Endothelial cell of umbilical vein (primary cell): ENCODE measurements at regions of chr2 and their contacts with region 1.

Region 1: DNA sequence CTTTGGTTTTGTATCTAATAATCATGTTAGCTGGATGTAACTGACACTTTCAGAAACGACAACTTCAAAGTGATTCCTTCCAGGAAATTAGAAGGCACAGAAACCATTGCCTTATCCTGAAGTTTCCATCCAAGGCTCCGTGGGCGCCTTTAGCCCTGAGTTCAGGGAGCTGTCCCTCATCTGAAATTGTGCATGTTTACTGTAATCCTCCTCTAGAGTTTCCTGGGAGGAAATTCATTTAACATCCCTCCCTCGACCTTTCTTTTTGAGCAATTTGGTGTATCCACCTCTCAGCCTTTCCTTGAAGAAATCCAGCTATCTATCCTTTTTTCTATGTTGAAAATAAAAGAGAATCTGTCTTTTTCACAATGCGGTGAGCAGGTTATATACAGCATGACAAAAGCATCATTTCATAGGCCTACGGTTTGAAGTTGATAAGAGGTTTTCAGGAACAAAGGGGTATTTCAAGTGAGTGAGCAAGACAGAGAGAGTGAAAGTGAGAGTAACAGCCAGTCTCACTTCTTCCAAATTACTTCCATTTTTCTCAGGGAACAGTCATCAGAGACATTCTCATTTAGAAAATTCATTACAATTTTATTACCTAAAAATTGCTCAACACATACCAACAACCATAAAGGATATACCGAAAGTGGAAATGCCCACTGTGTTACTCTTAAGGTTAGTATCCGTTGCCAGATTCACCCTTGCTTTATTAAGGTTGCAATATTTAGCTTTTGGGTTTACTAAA is 167.3 kb downstream of the MREG start:
- DNase-seq: peak; percentile 58
- H3K4me3 ChIP-seq: peak overlapping the region in 2 of 3 experiments; percentile 13 to 91
- H3K27ac ChIP-seq: peak overlapping the region; percentile 98
- H3K4me1 ChIP-seq: peaks cover 87% of the 10 kb centered on the region
- H3K27me3 ChIP-seq: no peaks in the 10 kb centered on the region
- CTCF ChIP-seq: no peak
- POLR2A ChIP-seq: peak; percentile 8

Region 2: DNA sequence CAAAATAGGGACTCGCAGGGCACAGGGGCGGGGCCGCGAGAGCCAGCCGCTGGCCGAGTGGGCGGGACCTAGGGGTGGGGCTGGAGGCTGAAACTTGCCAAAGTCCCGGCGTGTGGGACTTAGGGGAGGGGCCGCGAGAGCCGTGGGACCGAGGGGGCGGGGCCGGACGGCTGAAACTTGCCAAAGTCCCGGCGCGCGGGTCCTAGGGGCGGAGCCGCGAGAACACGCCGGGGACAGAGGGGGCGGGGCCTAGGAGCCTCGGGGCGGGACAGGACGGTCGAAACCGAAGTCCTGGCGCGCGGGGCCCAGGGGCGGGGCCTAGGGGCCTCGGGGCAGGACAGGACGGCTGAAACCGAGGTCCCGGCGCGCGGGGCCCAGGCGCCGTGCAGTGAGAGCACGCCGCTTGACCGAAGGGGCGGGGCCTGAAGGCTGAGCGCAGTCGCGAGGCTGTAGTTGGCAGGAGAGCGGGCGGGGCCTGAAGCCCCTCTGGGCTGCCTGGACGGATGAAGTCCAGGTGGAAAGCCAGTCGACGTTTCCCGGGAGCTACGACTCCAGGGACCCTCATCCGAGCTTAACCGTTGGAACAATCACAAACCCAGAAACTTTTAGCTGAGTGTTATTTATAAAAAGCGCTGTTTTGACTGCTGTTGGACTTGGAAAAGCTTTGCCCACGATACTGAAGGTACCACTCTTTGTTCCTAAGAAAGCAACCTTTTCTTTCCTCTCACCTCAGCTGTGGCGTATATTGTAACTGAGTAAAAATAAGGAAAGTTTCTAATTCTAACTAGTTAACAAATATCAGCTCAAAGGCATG is 1036.1 kb before region 1 on chr2:
- CTCF ChIA-PET with region 1: no interaction called
- POLR2A ChIA-PET with region 1: no interaction called
- dilution Hi-C with region 1: no loop called
- intact Hi-C with region 1: loop called (anchors 5 kb)
- DNase-seq: peak; percentile 100
- H3K4me3 ChIP-seq: peak overlapping the region; percentile 71 to 87 (median 85)
- H3K27ac ChIP-seq: peak overlapping the region; percentile 55
- H3K4me1 ChIP-seq: peaks cover 30% of the 10 kb centered on the region
- H3K27me3 ChIP-seq: peaks cover 0 to 6% of the 10 kb centered on the region in 2 experiments
- CTCF ChIP-seq: no peak
- POLR2A ChIP-seq: no peak

Region 3: DNA sequence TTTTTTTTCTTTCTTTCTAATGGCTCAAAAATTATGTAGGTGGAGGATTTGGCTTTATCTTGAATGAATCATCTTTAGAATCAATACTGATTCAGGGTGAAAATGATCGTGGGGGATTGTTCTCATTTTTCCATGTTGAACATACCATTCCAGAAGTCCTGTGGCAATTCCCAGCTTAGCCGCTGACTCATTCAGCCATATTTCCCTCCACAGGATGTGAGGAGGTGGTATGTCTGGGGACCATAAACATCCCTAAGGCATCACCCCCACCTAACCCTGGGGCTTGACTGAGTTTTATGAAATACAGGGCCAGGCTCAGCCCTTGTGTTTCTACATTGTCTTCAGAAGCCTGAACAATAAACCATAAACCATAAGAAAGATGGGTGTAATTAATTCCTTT is 317.5 kb before region 1 on chr2:
- CTCF ChIA-PET with region 1: no interaction called
- POLR2A ChIA-PET with region 1: no interaction called
- dilution Hi-C with region 1: no loop called
- intact Hi-C with region 1: loop called (anchors 1 kb)
- DNase-seq: peak; percentile 98
- H3K4me3 ChIP-seq: no peak overlapping the region
- H3K27ac ChIP-seq: peak overlapping the region; percentile 99
- H3K4me1 ChIP-seq: peaks cover 44% of the 10 kb centered on the region
- H3K27me3 ChIP-seq: no peaks in the 10 kb centered on the region
- CTCF ChIP-seq: no peak
- POLR2A ChIP-seq: no peak

Region 4: DNA sequence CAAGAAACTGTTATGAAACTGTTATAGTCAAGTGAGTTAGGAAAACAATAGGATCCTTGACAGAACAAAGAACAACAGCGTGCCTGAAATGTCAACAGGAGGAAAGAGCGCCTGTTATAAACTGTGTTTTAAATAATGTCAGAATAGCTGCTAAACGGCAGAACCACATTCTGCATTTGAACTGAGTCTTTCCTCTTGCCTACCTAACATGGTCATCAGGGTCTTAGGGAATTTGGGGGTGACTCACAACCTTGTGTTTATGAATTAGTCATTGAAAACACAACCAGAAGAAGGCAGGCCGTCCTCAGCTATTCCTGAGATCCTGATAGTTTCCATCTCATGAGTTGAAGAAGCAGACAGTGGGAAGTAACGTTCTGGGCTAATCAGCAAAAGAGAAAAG is 188.2 kb before region 1 on chr2:
- CTCF ChIA-PET with region 1: no interaction called
- POLR2A ChIA-PET with region 1: no interaction called
- dilution Hi-C with region 1: no loop called
- intact Hi-C with region 1: loop called (anchors 5 kb)
- DNase-seq: peak; percentile 87
- H3K4me3 ChIP-seq: no peak overlapping the region
- H3K27ac ChIP-seq: peak overlapping the region; percentile 27
- H3K4me1 ChIP-seq: peaks cover 15% of the 10 kb centered on the region
- H3K27me3 ChIP-seq: no peaks in the 10 kb centered on the region
- CTCF ChIP-seq: no peak
- POLR2A ChIP-seq: no peak

Region 5: GRCh38 chr2:215717501-215718381 is 128.3 kb before region 1 on chr2:
- CTCF ChIA-PET with region 1: no interaction called
- POLR2A ChIA-PET with region 1: no interaction called
- dilution Hi-C with region 1: no loop called
- intact Hi-C with region 1: loop called (anchors 1 kb)
- DNase-seq: peak; percentile 88
- H3K4me3 ChIP-seq: peak overlapping the region in 1 of 3 experiments; percentile 28
- H3K27ac ChIP-seq: peak overlapping the region; percentile 92
- H3K4me1 ChIP-seq: peaks cover 45% of the 10 kb centered on the region
- H3K27me3 ChIP-seq: no peaks in the 10 kb centered on the region
- CTCF ChIP-seq: no peak
- POLR2A ChIP-seq: no peak

Region 6: GRCh38 chr2:215793747-215794595 is 52.0 kb before region 1 on chr2:
- CTCF ChIA-PET with region 1: no interaction called
- POLR2A ChIA-PET with region 1: no interaction called
- dilution Hi-C with region 1: no loop called
- intact Hi-C with region 1: loop called (anchors 2 kb)
- DNase-seq: peak; percentile 97
- H3K4me3 ChIP-seq: no peak overlapping the region
- H3K27ac ChIP-seq: peak overlapping the region; percentile 82
- H3K4me1 ChIP-seq: peaks cover 44% of the 10 kb centered on the region
- H3K27me3 ChIP-seq: no peaks in the 10 kb centered on the region
- CTCF ChIP-seq: no peak
- POLR2A ChIP-seq: no peak

Region 7: GRCh38 chr2:215880970-215881369 is 35.0 kb after region 1 on chr2:
- CTCF ChIA-PET with region 1: no interaction called
- POLR2A ChIA-PET with region 1: no interaction called
- dilution Hi-C with region 1: no loop called
- intact Hi-C with region 1: no loop called
- DNase-seq: no peak
- H3K4me3 ChIP-seq: no peak overlapping the region
- H3K27ac ChIP-seq: no peak overlapping the region
- H3K4me1 ChIP-seq: no peaks in the 10 kb centered on the region
- H3K27me3 ChIP-seq: no peaks in the 10 kb centered on the region
- CTCF ChIP-seq: no peak
- POLR2A ChIP-seq: no peak

Region 8: GRCh38 chr2:215920244-215921100 is 74.5 kb after region 1 on chr2:
- CTCF ChIA-PET with region 1: interaction called, 3 read pairs
- POLR2A ChIA-PET with region 1: no interaction called
- dilution Hi-C with region 1: no loop called
- intact Hi-C with region 1: loop called (anchors 1 kb)
- DNase-seq: peak; percentile 87
- H3K4me3 ChIP-seq: no peak overlapping the region
- H3K27ac ChIP-seq: no peak overlapping the region
- H3K4me1 ChIP-seq: peaks cover 12% of the 10 kb centered on the region
- H3K27me3 ChIP-seq: no peaks in the 10 kb centered on the region
- CTCF ChIP-seq: peak; percentile 76 to 93
- POLR2A ChIP-seq: no peak